Activated CD4-positive, alpha-beta T cell treated with anti-CD3 and anti-CD28 coated beads for 36 hours (primary cell): ENCODE measurements at regions of chr2 and their contacts with region 1.

Region 1: DNA sequence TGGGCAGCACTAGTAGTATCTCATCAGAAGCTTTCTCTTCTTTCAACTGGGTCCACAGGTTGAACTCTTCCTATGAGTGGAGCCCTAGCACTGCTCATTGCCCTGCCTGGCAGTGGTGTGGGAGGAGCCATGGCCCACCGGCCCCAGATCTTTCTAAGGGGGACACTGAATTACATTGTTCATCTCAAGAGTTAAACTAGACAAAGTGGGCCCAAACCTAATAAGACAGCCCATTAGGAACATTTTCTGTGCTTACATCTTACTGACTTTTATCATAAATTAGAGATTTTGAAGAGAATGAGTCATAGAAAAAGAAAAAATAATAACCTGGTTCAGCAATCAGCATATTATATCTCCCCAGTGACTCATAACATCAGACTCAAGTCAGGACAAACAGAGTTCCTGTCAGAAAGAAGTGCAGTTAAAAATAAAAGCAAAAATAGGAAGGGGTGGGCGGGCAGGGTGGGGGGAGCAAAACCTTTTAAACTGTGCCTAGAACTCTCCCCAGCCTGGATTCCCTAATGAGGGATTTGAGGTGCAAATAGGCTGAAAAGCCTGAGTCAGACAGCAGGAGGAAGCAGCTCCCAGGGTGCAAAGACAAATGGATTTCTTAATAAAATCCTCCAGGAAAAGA is 161.6 kb upstream of the TRIB2 start:
- DNase-seq: peak; percentile 55
- ATAC-seq: peak; percentile 92
- H3K4me3 Mint-ChIP-seq: peak overlapping the region; percentile 33
- H3K27ac Mint-ChIP-seq: peak overlapping the region; percentile 75
- H3K4me1 Mint-ChIP-seq: peaks cover 36% of the 10 kb centered on the region
- H3K27me3 Mint-ChIP-seq: no peaks in the 10 kb centered on the region

Region 2: DNA sequence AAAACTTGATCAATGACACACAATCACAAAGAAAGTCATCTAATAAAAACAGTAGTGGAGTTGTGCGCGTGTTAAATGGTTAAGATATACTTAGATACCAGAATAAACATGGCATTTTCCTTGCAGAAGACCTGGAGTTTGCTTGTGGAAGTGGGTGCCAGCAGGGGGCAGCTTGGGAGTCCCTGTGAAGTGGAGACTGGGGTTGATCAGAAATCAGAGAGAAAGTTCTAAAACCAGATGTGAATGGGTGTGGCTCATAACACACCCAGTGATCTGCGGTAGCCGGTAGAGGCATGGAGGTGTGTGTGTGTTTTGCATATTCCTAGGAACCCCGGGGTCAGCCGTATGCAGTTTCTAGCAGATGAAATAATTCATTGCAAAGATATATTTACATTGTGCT is 138.5 kb before region 1 on chr2:
- CTCF ChIA-PET with region 1: no interaction called
- POLR2A ChIA-PET with region 1: no interaction called
- intact Hi-C with region 1: loop called in 1 of 2 experiments (anchors 1 kb)
- DNase-seq: peak; percentile 69
- ATAC-seq: peak; percentile 43
- H3K4me3 Mint-ChIP-seq: no peak overlapping the region
- H3K27ac Mint-ChIP-seq: no peak overlapping the region
- H3K4me1 Mint-ChIP-seq: peaks cover 36% of the 10 kb centered on the region
- H3K27me3 Mint-ChIP-seq: no peaks in the 10 kb centered on the region